ENCODE measurements at regions of chr20 and their contacts with region 1.

Region 1: DNA sequence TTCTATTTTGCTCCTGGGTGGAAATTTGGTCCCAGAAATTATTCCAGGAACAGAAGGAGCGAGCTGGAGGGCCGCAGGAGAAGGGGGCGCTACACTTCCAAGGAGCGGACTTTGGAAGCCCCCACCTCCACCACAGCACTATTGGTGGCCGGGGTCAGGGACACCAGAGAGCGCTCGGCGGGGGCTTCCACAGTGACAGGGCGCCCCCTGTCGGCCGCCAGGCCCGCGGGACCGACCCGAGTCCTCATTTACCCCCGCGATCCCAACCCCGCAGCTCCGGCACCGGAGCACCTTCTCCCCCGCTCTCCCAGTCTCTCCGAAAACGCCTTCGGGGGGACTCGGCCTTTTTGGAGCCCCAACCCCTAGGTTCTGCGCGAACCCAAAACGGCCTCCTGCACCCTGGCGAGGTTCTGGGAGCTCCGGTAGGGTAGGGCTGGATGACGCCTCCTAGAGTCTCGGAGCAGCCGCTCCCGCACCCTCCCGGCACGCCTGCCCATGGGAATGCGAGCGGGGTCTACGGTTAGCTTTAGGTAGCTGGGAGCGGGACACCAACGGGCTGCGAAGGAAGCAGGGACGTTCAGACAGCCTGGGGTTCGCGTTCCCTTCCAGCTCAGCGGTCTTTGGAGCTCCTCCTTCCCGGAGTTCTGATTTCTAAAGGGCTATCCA is 2.4 kb upstream of the FOXA2 start:
- DNase-seq: no peak
- H3K4me3 ChIP-seq: no peak overlapping the region
- H3K27ac ChIP-seq: no peak overlapping the region
- H3K4me1 ChIP-seq: peaks cover 23% of the 10 kb centered on the region
- H3K27me3 ChIP-seq: peaks cover 48% of the 10 kb centered on the region
- CTCF ChIP-seq: peak; percentile 14 to 77

Region 2: GRCh38 chr20:22312744-22313346 is 273.9 kb before region 1 on chr20:
- CTCF ChIA-PET with region 1: interaction called, 10 read pairs
- dilution Hi-C with region 1: no loop called
- in situ Hi-C with region 1: no loop called
- intact Hi-C with region 1: no loop called
- DNase-seq: peak; percentile 51
- H3K4me3 ChIP-seq: no peak overlapping the region
- H3K27ac ChIP-seq: no peak overlapping the region
- H3K4me1 ChIP-seq: no peaks in the 10 kb centered on the region
- H3K27me3 ChIP-seq: peaks cover 3% of the 10 kb centered on the region
- CTCF ChIP-seq: peak; percentile 66 to 72

Region 3: DNA sequence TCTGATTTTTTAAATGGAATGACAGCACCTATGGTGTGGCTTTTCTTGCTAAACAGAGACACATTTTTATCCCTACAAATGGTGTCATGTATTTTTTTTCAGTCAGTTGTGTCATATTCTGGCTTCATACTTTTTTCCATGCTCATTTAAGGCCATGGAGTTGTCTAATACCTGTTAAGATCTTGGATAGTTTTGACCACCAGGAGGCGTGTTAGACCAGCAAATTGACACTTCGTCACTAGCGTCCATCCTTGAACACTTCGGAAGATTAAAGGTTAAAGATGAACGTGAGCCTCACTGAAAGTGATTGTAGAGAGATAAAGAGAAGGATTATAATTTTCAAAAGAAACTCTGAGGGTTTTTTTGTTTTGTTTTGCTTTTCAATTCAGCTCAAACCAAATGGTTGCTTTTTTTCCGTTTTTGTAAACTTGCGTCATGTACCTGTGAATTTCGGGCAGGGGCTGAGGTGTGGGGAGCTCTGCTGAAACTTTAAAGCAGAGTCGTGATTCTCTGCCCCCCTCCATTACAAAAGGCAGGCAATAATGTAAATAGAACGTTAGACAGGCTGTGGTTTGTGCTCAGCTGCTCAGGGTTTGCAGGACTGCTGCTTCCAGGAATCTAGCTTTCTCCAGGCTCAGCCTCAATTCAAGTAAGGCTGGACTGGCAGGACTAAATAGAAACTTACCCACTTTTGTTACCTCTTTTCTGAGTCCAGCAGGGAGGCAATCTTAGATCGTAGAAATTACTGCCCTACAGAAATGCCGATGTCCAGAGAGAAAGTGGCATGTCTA is 247.5 kb before region 1 on chr20:
- CTCF ChIA-PET with region 1: interaction called, 11 read pairs
- dilution Hi-C with region 1: no loop called
- in situ Hi-C with region 1: loop called (anchors 5 to 10 kb)
- intact Hi-C with region 1: loop called (anchors 1 kb)
- DNase-seq: peak; percentile 65
- H3K4me3 ChIP-seq: no peak overlapping the region
- H3K27ac ChIP-seq: no peak overlapping the region
- H3K4me1 ChIP-seq: peaks cover 22% of the 10 kb centered on the region
- H3K27me3 ChIP-seq: no peaks in the 10 kb centered on the region
- CTCF ChIP-seq: peak; percentile 72 to 82

Region 4: DNA sequence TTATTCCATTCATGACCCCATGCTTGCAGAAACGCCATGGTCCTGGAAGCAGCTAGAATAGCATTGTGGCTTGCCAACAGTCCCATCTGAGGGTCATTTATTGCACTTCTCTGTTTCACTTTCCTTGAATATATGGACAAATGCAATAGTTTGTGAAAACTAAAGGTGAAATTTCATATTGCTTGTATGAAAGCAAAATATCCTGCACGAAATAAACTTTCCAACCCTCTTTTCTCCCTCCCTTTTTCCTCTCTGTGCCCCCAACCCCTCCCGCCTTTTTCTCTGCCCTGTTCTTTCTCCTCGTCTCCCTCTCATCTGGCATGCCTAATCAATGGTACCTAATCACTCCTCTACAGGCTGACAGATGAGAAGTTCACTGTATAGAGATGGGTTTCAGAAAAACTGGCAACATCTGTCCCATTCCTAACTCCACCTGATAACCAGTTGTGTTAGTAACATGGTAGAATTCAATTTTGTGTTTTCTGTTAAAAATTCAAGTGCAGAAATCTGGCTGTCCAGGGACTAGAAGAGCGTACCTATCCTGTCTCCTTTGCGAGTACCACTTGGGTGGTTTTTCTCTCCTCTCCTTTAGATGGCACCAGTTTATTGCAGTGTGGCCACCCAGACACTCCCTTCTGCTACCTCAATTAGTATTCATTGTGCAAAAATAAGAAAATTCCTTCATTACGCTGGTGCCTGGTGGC is 201.0 kb before region 1 on chr20:
- CTCF ChIA-PET with region 1: interaction called, 6 read pairs
- dilution Hi-C with region 1: no loop called
- in situ Hi-C with region 1: no loop called
- intact Hi-C with region 1: loop called (anchors 1 kb)
- DNase-seq: peak; percentile 27
- H3K4me3 ChIP-seq: no peak overlapping the region
- H3K27ac ChIP-seq: no peak overlapping the region
- H3K4me1 ChIP-seq: peaks cover 62% of the 10 kb centered on the region
- H3K27me3 ChIP-seq: no peaks in the 10 kb centered on the region
- CTCF ChIP-seq: peak; percentile 32 to 56

Region 5: DNA sequence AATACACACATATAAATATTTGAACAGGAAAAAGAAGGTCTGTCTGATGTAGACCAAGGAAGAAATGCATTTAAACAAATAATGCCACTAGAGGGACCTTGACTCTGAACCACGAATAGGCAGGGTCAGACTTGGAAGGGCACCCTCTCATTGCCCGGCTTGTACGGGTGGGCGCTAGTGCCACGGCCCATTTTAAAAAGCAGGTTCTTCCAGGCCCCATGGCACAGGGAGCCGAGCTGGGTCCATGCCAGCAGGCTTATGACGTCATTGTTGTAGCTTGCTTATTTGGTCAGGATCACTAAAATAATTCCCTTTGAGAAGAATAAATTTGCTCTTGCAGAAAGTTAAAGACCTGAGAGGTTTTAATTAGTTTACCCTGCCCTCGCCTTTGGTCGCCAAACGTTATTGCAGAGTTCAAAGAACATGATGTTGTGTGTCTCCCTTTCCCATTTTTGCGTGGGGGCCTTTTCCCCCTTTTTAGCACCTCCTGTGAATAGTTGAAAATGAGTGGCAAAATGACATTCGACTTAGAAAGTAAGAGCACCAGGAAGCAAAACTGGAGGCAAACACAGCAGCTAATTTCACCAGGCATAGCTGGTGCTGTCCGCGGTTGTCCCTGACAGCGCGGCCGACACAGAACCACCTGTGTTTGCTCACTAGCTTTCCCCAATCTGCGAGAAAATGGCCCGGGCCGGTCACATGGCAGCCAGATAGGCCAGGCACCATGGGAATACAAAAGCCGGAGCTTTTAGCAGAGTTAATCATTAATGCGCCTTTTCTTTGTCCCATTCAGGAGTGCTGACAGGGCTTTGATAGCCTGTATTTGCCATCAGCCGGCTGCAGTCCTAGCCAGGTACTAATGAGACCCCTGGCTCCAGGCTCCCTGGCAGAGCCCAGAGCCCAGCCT is 96.2 kb before region 1 on chr20:
- CTCF ChIA-PET with region 1: no interaction called
- dilution Hi-C with region 1: no loop called
- in situ Hi-C with region 1: no loop called
- intact Hi-C with region 1: no loop called
- DNase-seq: no peak
- H3K4me3 ChIP-seq: no peak overlapping the region
- H3K27ac ChIP-seq: no peak overlapping the region
- H3K4me1 ChIP-seq: no peaks in the 10 kb centered on the region
- H3K27me3 ChIP-seq: no peaks in the 10 kb centered on the region
- CTCF ChIP-seq: peak in 1 of 2 donors; percentile 28

Region 6: DNA sequence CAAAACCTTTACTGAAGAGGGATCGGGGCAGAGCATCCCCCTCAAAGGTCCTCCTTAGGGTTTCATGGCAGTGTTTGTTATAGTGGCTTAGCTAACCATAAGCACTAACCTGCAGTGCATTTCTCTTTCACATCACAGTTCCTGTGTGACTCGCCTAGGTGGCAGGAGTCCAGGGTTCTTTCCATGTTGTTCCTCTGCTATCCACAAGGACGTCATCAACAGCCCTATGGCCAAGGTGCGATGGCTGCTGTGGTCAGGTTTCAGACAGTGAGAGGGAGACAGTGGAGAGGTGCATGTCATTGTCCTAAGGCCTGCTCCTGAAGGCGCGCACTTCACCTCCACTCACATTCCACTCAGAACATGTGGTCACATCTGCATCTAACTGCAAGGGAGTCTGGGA is 36.4 kb after region 1 on chr20:
- CTCF ChIA-PET with region 1: no interaction called
- dilution Hi-C with region 1: no loop called
- in situ Hi-C with region 1: no loop called
- intact Hi-C with region 1: no loop called
- DNase-seq: no peak
- H3K4me3 ChIP-seq: no peak overlapping the region
- H3K27ac ChIP-seq: no peak overlapping the region
- H3K4me1 ChIP-seq: no peaks in the 10 kb centered on the region
- H3K27me3 ChIP-seq: no peaks in the 10 kb centered on the region
- CTCF ChIP-seq: peak in 1 of 2 donors; percentile 19

Region 7: GRCh38 chr20:22652681-22653588 is 66.2 kb after region 1 on chr20:
- CTCF ChIA-PET with region 1: no interaction called
- dilution Hi-C with region 1: loop called (anchors 5 kb)
- in situ Hi-C with region 1: no loop called
- intact Hi-C with region 1: no loop called
- DNase-seq: no peak
- H3K4me3 ChIP-seq: no peak overlapping the region
- H3K27ac ChIP-seq: no peak overlapping the region
- H3K4me1 ChIP-seq: no peaks in the 10 kb centered on the region
- H3K27me3 ChIP-seq: no peaks in the 10 kb centered on the region
- CTCF ChIP-seq: no peak

Region 8: GRCh38 chr20:22744341-22745193 is 157.8 kb after region 1 on chr20:
- CTCF ChIA-PET with region 1: no interaction called
- dilution Hi-C with region 1: no loop called
- in situ Hi-C with region 1: no loop called
- intact Hi-C with region 1: no loop called
- DNase-seq: peak; percentile 35
- H3K4me3 ChIP-seq: no peak overlapping the region
- H3K27ac ChIP-seq: no peak overlapping the region
- H3K4me1 ChIP-seq: peaks cover 26% of the 10 kb centered on the region
- H3K27me3 ChIP-seq: no peaks in the 10 kb centered on the region
- CTCF ChIP-seq: no peak